CD8-positive, alpha-beta T cell (primary cell): ENCODE measurements at regions of chr13 and their contacts with region 1.

Region 1: DNA sequence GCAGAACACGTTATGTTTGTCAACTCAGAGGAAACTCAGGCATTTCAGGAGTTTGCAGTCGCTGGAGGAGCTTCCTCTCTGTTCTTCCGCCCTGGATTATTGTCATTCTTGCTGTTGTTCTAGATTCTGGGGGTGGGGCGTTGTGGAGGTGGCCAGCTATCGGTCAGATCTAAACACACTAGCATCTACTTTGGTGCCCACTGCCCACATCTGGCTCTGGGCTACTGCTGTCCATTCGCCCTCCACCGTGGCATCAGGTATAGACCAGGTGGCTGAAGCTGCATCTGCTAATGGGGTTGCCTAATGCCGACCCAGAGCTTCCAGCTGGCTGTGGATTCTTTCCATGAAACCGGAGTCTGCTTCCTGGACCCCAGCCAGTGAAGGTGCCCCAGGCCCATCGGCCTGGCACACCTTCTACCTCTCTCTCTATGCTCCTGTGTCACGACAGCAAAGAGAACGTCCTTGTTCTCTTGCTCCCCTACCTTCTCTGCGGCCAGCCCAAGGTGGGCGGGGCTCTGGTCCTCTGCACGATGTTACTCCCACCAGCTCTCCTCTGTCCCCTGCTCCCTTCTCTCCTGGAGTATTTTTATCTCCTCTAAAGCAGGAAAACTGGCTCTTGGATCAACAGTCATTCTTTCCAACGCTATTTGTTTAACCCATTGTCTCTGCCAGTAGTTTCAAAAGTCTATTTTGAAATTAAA is 36.6 kb upstream of the DGKH start:
- DNase-seq: no peak
- ATAC-seq: no peak
- H3K4me3 ChIP-seq: no peak overlapping the region
- H3K4me3 Mint-ChIP-seq: no peak overlapping the region
- H3K27ac ChIP-seq: no peak overlapping the region
- H3K27ac Mint-ChIP-seq: no peak overlapping the region
- H3K4me1 ChIP-seq: no peaks in the 10 kb centered on the region
- H3K4me1 Mint-ChIP-seq: no peaks in the 10 kb centered on the region
- H3K27me3 ChIP-seq: no peaks in the 10 kb centered on the region
- H3K27me3 Mint-ChIP-seq: peaks cover 3% of the 10 kb centered on the region
- CTCF ChIP-seq: no peak

Region 2: GRCh38 chr13:41995946-41996345 is 15.9 kb before region 1 on chr13:
- CTCF ChIA-PET with region 1: no interaction called
- POLR2A ChIA-PET with region 1: no interaction called
- intact Hi-C with region 1: no loop called
- DNase-seq: no peak
- ATAC-seq: no peak
- H3K4me3 ChIP-seq: no peak overlapping the region
- H3K4me3 Mint-ChIP-seq: no peak overlapping the region
- H3K27ac ChIP-seq: no peak overlapping the region
- H3K27ac Mint-ChIP-seq: no peak overlapping the region
- H3K4me1 ChIP-seq: no peaks in the 10 kb centered on the region
- H3K4me1 Mint-ChIP-seq: no peaks in the 10 kb centered on the region
- H3K27me3 ChIP-seq: no peaks in the 10 kb centered on the region
- H3K27me3 Mint-ChIP-seq: peaks cover 3% of the 10 kb centered on the region
- CTCF ChIP-seq: no peak

Region 3: GRCh38 chr13:42028113-42028799 is 16.4 kb after region 1 on chr13:
- CTCF ChIA-PET with region 1: no interaction called
- POLR2A ChIA-PET with region 1: no interaction called
- intact Hi-C with region 1: no loop called
- DNase-seq: no peak
- ATAC-seq: no peak
- H3K4me3 ChIP-seq: no peak overlapping the region
- H3K4me3 Mint-ChIP-seq: no peak overlapping the region
- H3K27ac ChIP-seq: no peak overlapping the region
- H3K27ac Mint-ChIP-seq: no peak overlapping the region
- H3K4me1 ChIP-seq: no peaks in the 10 kb centered on the region
- H3K4me1 Mint-ChIP-seq: no peaks in the 10 kb centered on the region
- H3K27me3 ChIP-seq: peaks cover 0 to 4% of the 10 kb centered on the region in 2 experiments
- H3K27me3 Mint-ChIP-seq: peaks cover 6% of the 10 kb centered on the region
- CTCF ChIP-seq: no peak

Region 4: DNA sequence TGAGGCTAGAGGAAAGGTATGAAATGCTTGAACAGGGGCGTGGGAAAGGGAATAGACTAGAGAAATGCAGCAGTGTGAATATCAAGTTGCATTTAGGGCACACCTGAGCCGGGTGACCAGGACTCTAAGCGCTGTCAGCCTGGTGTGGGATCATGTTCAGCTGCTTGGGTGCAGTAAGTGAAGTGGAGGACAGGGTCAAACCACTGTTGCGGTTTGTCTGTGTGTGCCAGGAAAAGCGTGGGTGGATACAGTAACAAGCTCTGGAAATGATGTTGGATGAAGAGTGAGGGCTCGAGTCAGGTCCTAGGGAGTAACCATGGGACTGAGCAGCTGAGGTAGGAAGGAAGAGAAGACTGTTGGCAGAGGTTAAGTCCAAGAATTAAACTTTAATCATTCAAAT is 52.4 kb after region 1 on chr13:
- CTCF ChIA-PET with region 1: no interaction called
- POLR2A ChIA-PET with region 1: no interaction called
- intact Hi-C with region 1: no loop called
- DNase-seq: no peak
- ATAC-seq: no peak
- H3K4me3 ChIP-seq: no peak overlapping the region
- H3K4me3 Mint-ChIP-seq: no peak overlapping the region
- H3K27ac ChIP-seq: no peak overlapping the region
- H3K27ac Mint-ChIP-seq: no peak overlapping the region
- H3K4me1 ChIP-seq: no peaks in the 10 kb centered on the region
- H3K4me1 Mint-ChIP-seq: no peaks in the 10 kb centered on the region
- H3K27me3 ChIP-seq: no peaks in the 10 kb centered on the region
- H3K27me3 Mint-ChIP-seq: no peaks in the 10 kb centered on the region
- CTCF ChIP-seq: no peak

Region 5: GRCh38 chr13:42078128-42078808 is 66.4 kb after region 1 on chr13:
- CTCF ChIA-PET with region 1: no interaction called
- POLR2A ChIA-PET with region 1: no interaction called
- intact Hi-C with region 1: loop called in 1 of 2 experiments (anchors 10 kb)
- DNase-seq: peak in 1 of 9 experiments; percentile 3
- ATAC-seq: no peak
- H3K4me3 ChIP-seq: no peak overlapping the region
- H3K4me3 Mint-ChIP-seq: no peak overlapping the region
- H3K27ac ChIP-seq: no peak overlapping the region
- H3K27ac Mint-ChIP-seq: no peak overlapping the region
- H3K4me1 ChIP-seq: no peaks in the 10 kb centered on the region
- H3K4me1 Mint-ChIP-seq: peaks cover 11% of the 10 kb centered on the region
- H3K27me3 ChIP-seq: no peaks in the 10 kb centered on the region
- H3K27me3 Mint-ChIP-seq: no peaks in the 10 kb centered on the region
- CTCF ChIP-seq: no peak